Activated CD4-positive, alpha-beta memory T cell treated with anti-CD3 and anti-CD28 coated beads, Interleukin-2, amount 10 ng/mL, durations not matched to agents 7 days and 5 days (primary cell): ENCODE measurements at regions of chr16 and their contacts with region 1.

Region 1: DNA sequence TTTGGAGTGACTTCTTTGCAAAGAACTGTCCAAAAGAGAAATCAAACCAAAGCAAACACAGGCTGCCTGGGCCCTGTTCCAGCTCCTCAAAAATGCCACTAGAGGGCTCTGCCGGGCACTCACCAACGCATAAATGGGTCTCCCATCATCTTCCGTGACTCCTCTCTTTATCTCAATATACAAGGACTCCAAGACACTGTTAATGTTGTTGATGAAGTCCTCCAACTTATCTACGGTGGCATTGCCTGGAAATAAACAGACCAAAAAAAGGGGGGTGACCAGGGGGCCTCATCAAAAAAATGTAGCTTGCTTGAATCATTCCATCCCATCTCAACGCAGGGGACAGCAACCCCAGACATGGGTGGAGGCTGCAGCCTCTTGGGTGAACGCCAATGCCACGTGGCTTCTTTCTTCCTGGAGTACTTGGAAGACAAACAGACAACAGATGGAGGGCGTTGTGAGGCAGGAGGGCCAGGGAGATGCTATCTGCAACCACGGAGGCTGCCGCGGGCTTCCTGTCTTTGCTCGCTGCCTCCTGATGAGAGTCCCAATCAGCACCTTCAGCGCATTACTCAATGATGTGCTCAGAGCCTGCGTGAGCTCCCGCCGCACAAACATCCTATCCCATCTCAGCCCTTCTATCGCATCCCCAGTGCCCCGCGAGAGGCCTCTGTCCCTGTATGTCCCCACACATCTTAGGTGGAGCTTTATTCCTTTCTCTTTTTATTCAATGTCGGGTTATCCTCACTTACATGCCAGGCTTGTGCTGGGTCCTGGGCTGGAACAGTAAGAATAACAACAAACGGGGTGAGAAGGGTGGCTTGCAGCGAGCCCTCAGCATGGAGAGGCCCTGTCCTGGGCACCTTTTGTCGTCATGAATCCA is 32.0 kb downstream of the KDM8 start:
- DNase-seq: peak; percentile 96
- H3K4me3 Mint-ChIP-seq: peak overlapping the region; percentile 67
- H3K27ac Mint-ChIP-seq: peak overlapping the region; percentile 100
- H3K4me1 Mint-ChIP-seq: peaks cover 98% of the 10 kb centered on the region
- H3K27me3 Mint-ChIP-seq: no peaks in the 10 kb centered on the region

Region 2: DNA sequence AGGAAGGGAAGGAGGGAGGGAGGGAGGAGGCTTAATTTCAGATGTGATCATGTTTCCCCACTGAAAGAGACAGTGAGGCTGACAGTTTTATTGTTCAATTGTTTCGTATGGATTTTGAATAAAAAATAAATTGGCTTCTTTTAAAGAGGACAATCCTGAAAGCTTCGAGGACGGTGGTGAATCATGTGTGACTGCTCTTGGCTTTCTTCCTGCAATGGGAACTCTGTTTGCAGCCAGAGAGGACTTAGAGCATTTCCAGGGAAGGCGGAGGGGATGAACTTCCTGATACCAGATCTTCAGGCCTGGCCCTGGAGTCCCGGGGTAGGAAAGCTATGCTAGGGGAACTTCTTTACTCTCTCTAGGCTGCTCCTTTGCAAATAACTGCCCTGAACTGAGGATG is 241.3 kb before region 1 on chr16:
- CTCF ChIA-PET with region 1: no interaction called
- POLR2A ChIA-PET with region 1: no interaction called
- DNase-seq: no peak
- H3K4me3 Mint-ChIP-seq: no peak overlapping the region
- H3K27ac Mint-ChIP-seq: no peak overlapping the region
- H3K4me1 Mint-ChIP-seq: no peaks in the 10 kb centered on the region
- H3K27me3 Mint-ChIP-seq: peaks cover 3% of the 10 kb centered on the region

Region 3: DNA sequence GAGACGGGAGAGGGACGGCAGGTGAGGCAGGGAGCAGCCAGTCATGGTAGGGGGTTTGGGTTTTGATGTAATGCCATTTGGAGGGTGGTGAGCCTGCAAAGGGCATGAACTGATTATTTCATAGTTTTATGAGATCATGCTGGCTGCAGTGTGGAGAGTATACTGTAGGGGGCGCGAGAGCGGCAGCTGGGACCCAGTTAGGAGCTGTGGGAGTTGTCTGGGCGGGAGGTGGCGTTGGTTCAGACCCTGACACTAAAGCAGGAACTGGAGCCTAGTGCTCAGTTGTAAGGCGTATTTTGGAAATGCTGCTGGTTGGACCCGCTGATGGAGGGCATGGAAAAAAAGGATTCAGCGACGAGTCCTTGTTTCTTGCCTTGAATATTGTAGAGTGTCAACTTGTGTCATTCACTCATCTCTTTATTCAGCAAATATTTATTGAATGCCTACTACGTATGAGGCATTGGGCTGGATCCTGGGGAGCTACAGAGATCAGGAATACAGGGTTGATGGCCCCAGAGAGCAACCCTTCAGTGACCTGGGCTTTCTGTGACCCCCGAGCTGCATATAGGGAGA is 55.7 kb before region 1 on chr16:
- CTCF ChIA-PET with region 1: interaction called, 56 read pairs
- POLR2A ChIA-PET with region 1: interaction called, 29 read pairs
- DNase-seq: peak; percentile 92
- H3K4me3 Mint-ChIP-seq: no peak overlapping the region
- H3K27ac Mint-ChIP-seq: no peak overlapping the region
- H3K4me1 Mint-ChIP-seq: peaks cover 36% of the 10 kb centered on the region
- H3K27me3 Mint-ChIP-seq: peaks cover 6% of the 10 kb centered on the region

Region 4: DNA sequence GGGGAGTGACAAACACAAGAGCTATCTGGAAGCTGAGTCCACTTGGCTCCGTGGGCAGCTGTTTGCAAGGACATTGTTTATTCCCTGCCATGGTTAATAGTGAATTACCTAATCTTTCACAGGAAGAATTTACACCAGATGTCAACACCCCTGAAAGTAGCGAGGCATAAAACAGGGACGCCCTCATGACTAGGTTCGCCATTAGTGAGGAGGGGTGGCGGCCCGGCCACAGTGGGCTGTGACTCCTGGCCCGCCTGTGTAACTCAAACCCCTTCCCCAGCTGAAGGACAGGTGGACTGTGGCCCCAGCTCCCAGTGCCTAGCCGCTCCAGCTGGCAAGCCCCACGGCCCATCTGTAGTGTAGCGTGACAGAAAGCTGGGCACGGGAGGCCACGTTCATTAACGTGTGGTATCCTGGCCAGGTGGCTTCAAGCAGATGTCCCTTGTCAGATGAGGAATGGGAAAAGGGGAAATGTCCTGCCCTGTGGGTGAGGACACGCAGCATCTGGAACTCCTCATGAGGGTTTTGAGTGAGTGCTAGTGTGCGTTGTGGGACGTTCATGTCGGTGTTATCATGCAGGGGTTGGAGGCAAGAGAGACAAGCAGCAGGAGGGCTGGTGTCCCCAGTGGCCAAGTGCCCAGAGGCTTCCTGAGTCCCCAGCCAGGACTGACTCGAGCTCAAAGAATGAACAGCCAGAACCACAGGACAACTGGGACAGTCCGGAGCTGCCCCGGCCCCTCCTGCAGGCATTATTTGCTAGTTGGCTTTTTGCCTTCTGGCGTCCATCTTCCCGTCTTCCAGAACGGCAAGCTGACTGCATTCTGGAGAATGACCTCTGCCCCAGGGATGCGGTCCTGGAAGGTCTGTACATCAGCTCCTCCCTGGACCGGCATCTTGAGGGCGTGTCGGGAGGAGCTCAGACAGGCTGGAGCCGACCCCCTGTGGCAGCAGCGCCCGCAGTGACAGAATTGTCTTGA is 12.8 kb before region 1 on chr16:
- CTCF ChIA-PET with region 1: interaction called, 13 read pairs
- POLR2A ChIA-PET with region 1: interaction called, 14 read pairs
- DNase-seq: no peak
- H3K4me3 Mint-ChIP-seq: no peak overlapping the region
- H3K27ac Mint-ChIP-seq: no peak overlapping the region
- H3K4me1 Mint-ChIP-seq: peaks cover 21% of the 10 kb centered on the region
- H3K27me3 Mint-ChIP-seq: no peaks in the 10 kb centered on the region

Region 5: DNA sequence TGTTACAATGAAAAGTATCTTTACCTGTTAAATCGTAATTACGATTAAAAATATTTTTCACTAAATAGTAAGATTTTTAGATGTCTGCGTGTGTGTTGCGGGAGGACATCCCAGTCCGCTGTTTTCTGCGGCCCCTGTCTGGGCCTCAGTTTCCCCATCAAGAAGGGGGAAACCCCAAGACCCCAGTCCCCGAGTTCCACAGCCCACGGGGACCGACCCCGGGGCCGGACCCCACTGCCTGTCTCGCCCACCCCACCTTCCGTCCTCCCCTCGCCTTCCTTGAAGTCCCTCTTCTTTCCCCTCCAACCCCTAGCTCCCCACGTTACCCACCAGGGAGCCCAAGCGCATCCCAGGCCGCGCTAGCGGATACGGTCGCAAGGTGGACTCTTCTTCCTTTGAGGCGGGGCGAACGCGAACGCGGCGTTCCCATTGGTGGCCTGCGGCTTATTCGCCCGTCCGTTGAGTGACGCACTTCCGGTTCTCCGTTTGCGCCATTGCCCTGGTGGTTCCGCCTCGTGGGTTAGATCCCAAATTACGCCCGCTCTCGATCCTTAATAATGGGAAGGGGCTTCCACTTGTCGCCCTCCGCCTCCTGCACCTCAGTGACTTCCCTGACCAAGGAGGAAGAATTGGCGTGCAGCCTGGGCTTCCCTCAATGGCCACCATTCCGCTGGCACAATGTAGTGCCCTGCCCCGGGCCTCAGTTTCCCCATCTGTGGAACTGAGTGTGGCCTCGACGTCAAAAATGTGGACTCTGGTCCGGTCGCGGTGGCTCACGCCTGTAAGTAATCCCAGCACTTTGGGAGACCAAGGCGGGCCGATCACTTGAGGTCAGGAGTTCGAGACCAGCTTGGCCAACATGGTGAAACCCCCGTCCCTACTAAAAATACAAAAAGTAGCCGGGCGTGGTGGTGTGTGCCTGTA is 33.3 kb after region 1 on chr16 and contains the start of gene NSMCE1:
- CTCF ChIA-PET with region 1: interaction called, 74 read pairs
- POLR2A ChIA-PET with region 1: interaction called, 243 read pairs
- DNase-seq: peak; percentile 97
- H3K4me3 Mint-ChIP-seq: peak within 1 kb of the TSS; percentile 98
- H3K27ac Mint-ChIP-seq: peak within 1 kb of the TSS; percentile 90
- H3K4me1 Mint-ChIP-seq: peaks cover 65% of the 10 kb centered on the region
- H3K27me3 Mint-ChIP-seq: no peaks in the 10 kb centered on the region
- total RNA-seq, gene NSMCE1: 100 to 106 TPM

Region 6: GRCh38 chr16:27313422-27314160 is 78.3 kb after region 1 on chr16 and contains the start of gene IL4R:
- CTCF ChIA-PET with region 1: interaction called, 146 read pairs
- POLR2A ChIA-PET with region 1: interaction called, 448 read pairs
- DNase-seq: peak; percentile 69
- H3K4me3 Mint-ChIP-seq: peak within 1 kb of the TSS; percentile 97
- H3K27ac Mint-ChIP-seq: peak within 1 kb of the TSS; percentile 98
- H3K4me1 Mint-ChIP-seq: peaks cover 45% of the 10 kb centered on the region
- H3K27me3 Mint-ChIP-seq: peaks cover 8% of the 10 kb centered on the region
- total RNA-seq, gene IL4R: 257 to 268 TPM

Region 7: GRCh38 chr16:27347930-27348685 is 112.8 kb after region 1 on chr16:
- CTCF ChIA-PET with region 1: interaction called, 8 read pairs
- POLR2A ChIA-PET with region 1: interaction called, 10 read pairs
- DNase-seq: no peak
- H3K4me3 Mint-ChIP-seq: no peak overlapping the region
- H3K27ac Mint-ChIP-seq: peak overlapping the region; percentile 51
- H3K4me1 Mint-ChIP-seq: peaks cover 16% of the 10 kb centered on the region
- H3K27me3 Mint-ChIP-seq: no peaks in the 10 kb centered on the region

Region 8: GRCh38 chr16:27408012-27408601 is 172.8 kb after region 1 on chr16:
- CTCF ChIA-PET with region 1: interaction called, 8 read pairs
- POLR2A ChIA-PET with region 1: interaction called, 19 read pairs
- DNase-seq: no peak
- H3K4me3 Mint-ChIP-seq: peak overlapping the region; percentile 50
- H3K27ac Mint-ChIP-seq: peak overlapping the region; percentile 87
- H3K4me1 Mint-ChIP-seq: peaks cover 83% of the 10 kb centered on the region
- H3K27me3 Mint-ChIP-seq: no peaks in the 10 kb centered on the region